ENCODE measurements at regions of chr7 and their contacts with region 1.

Region 1: DNA sequence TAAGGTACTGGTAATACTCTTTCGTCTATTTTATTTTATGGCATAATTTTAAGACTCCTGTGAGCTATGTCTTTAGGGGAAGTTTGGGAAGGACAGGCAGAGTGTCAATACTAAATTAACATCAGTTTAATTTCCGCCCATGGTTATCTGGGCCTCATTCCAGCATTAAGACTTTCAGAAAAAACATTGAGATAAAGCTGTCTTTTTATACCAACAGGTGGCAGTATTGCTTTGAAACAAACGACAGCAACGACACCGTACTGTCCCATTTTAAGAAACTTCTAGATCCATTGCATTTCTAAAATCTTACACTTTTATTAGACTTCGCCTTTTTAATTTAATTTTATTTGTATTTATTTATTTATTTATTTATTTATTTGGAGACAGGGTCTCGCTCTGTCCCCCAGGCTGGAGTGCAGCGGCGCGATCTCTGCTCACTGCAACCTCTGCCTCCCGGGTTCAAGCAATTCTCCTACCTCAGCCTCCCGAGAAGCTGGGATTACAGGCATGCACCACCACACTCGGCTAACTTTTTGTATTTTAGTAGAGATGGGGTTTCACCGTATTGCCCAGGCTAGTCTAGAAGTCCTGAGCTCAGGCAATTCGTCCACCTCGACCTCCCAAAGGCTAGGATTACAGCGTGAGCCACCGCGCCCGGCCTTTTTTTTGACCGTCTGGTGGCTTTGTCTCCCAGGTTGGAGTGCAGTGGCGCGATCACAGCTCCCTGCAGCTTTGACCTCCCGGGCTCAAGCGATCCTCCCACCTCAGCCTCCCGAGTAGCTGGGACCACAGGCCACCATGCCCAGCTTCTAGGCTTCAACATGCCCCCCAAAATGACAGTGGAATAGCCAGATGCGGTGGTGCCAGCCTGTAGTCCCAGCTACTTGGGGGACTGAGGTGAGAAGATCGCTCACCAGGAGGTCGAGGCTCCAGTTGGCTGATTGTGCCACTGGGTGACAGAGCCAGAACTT is 78.7 kb upstream of the C1GALT1 start:
- DNase-seq: no peak
- ATAC-seq: peak; percentile 58

Region 2: GRCh38 chr7:7265081-7265686 is 161.6 kb after region 1 on chr7:
- intact Hi-C with region 1: loop called (anchors 10 kb)
- DNase-seq: no peak
- ATAC-seq: peak; percentile 44

Region 3: GRCh38 chr7:7304705-7305450 is 201.2 kb after region 1 on chr7:
- intact Hi-C with region 1: no loop called
- DNase-seq: no peak
- ATAC-seq: no peak

Region 4: GRCh38 chr7:7542251-7542835 is 438.7 kb after region 1 on chr7:
- intact Hi-C with region 1: loop called (anchors 5 kb)
- DNase-seq: no peak
- ATAC-seq: no peak